CD4-positive, alpha-beta memory T cell (primary cell): ENCODE measurements at regions of chr16 and their contacts with region 1.

Region 1: GRCh38 chr16:69565671-69566239 is at the start of gene NFAT5:
- DNase-seq: peak; percentile 82 to 99 (median 92)
- H3K4me3 ChIP-seq: peak within 1 kb of the TSS; percentile 92
- H3K4me3 Mint-ChIP-seq: peak within 1 kb of the TSS; percentile 92 to 99 (median 98)
- H3K27ac ChIP-seq: peak within 1 kb of the TSS; percentile 91
- H3K27ac Mint-ChIP-seq: peak within 1 kb of the TSS; percentile 94 to 99 (median 97)
- H3K4me1 ChIP-seq: peaks cover 43% of the 10 kb centered on the region
- H3K4me1 Mint-ChIP-seq: peaks cover 28 to 58% (median 37%) of the 10 kb centered on the region in 4 donors
- H3K27me3 ChIP-seq: no peaks in the 10 kb centered on the region
- H3K27me3 Mint-ChIP-seq: no peaks in the 10 kb centered on the region
- total RNA-seq, gene NFAT5: 29.2 to 35.6 TPM

Region 2: GRCh38 chr16:69273009-69273408 is 292.7 kb before region 1 on chr16:
- CTCF ChIA-PET with region 1: no interaction called
- POLR2A ChIA-PET with region 1: no interaction called
- intact Hi-C with region 1: no loop called
- DNase-seq: no peak
- H3K4me3 ChIP-seq: no peak overlapping the region
- H3K4me3 Mint-ChIP-seq: no peak overlapping the region
- H3K27ac ChIP-seq: no peak overlapping the region
- H3K27ac Mint-ChIP-seq: peak overlapping the region in 1 of 7 donors; percentile 53
- H3K4me1 ChIP-seq: no peaks in the 10 kb centered on the region
- H3K4me1 Mint-ChIP-seq: peaks cover 0 to 8% (median 1%) of the 10 kb centered on the region in 4 donors
- H3K27me3 ChIP-seq: no peaks in the 10 kb centered on the region
- H3K27me3 Mint-ChIP-seq: no peaks in the 10 kb centered on the region

Region 3: DNA sequence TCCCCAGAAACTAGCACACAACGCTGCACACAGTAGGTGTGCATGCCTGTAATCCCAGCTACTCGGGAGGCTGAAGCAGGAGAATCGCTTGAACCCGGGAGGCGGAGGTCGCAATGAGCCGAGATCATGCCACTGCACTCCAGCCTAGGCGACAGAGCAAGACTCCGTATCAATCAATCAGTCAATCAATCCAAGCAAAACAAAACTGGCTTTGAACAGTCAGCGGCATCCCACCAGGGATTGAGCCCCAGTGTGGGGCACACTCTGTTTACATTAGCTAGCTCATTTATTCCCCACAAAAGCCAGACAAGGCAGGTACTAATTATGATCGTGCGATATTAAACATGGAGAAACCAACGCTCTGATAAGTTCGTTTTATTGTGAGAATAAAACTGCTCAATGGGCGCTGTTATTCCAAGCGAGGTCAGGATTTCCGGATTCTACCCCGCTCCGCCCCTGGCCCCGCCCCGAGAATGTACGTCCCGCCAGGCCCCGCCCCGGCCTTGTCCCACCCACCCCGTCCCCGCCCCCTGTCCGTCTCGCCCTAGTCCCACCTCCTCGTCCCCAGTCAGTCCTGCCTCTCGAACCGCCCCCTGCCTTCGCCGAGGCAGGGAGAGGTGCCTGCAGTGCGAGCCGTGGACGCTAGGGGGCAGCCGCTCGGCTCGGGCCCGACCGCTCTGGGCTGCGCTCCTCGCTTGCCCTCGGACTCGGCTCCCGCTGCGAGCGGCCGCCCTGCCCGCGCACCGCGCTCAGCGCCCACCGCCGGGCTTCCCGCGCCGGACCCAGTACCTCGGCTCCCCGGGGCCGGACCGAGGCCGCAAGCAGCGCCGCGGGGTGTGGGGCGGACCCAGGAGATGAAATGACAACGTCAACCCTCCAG is 254.9 kb before region 1 on chr16 and contains the start of gene VPS4A:
- CTCF ChIA-PET with region 1: no interaction called
- POLR2A ChIA-PET with region 1: no interaction called
- intact Hi-C with region 1: loop called (anchors 2 kb)
- DNase-seq: peak; percentile 96 to 99 (median 97)
- H3K4me3 ChIP-seq: peak within 1 kb of the TSS; percentile 70 to 73
- H3K4me3 Mint-ChIP-seq: peak within 1 kb of the TSS; percentile 93 to 99 (median 98)
- H3K27ac ChIP-seq: peak within 1 kb of the TSS; percentile 85
- H3K27ac Mint-ChIP-seq: peak within 1 kb of the TSS; percentile 85 to 98 (median 95)
- H3K4me1 ChIP-seq: peaks cover 28% of the 10 kb centered on the region
- H3K4me1 Mint-ChIP-seq: peaks cover 16 to 36% (median 27%) of the 10 kb centered on the region in 4 donors
- H3K27me3 ChIP-seq: no peaks in the 10 kb centered on the region
- H3K27me3 Mint-ChIP-seq: no peaks in the 10 kb centered on the region
- total RNA-seq, gene VPS4A: 46.7 to 48.3 TPM

Region 4: GRCh38 chr16:69386596-69386995 is 179.2 kb before region 1 on chr16:
- CTCF ChIA-PET with region 1: interaction called, 3 read pairs
- POLR2A ChIA-PET with region 1: interaction called, 5 read pairs
- intact Hi-C with region 1: loop called (anchors 2 kb)
- DNase-seq: no peak
- H3K4me3 ChIP-seq: no peak overlapping the region
- H3K4me3 Mint-ChIP-seq: peak overlapping the region in 6 of 8 donors; percentile 48 to 98 (median 91)
- H3K27ac ChIP-seq: peak overlapping the region; percentile 81
- H3K27ac Mint-ChIP-seq: peak overlapping the region in 5 of 7 donors; percentile 59 to 98 (median 96)
- H3K4me1 ChIP-seq: peaks cover 30% of the 10 kb centered on the region
- H3K4me1 Mint-ChIP-seq: peaks cover 17 to 41% (median 27%) of the 10 kb centered on the region in 4 donors
- H3K27me3 ChIP-seq: no peaks in the 10 kb centered on the region
- H3K27me3 Mint-ChIP-seq: no peaks in the 10 kb centered on the region

Region 5: DNA sequence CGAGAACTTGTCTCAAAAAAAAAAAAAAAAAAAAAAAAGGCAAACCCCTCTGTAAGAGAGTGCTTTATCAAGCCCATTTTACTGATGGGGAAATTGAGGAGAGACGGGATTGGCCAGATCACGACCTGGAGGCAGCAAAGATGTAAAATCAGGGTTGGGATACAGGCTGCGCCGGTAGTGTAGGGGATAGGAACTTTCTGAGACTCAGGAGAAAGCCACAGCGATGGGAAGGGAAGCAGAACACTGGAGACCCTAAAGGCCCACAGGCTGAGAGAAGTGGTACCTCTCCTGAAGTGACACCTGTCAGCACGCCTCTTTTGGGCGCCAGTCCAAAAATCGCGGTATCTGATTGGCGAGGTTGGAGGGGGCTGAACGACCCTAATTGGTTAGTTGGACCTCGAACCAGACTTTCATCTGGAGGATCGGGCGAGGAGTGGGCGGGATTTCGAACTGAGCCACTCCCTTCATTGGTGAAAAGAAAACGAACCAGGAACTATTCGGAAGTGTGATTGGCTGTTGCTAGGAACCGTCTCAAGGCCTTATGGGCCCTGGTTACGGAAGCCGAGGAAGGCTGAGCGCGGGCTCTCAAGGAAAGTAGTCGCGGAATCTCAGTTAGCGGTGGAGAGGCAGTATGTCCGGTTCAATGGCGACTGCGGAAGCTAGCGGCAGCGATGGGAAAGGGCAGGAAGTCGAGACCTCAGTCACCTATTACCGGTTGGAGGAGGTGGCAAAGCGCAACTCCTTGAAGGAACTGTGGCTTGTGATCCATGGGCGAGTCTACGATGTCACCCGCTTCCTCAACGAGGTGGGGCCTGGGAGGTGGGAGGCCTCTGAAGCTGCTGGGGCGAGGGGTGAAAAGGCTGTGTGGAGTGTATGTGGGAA is 141.5 kb before region 1 on chr16 and contains the start of gene CYB5B:
- CTCF ChIA-PET with region 1: no interaction called
- POLR2A ChIA-PET with region 1: interaction called, 17 read pairs
- intact Hi-C with region 1: loop called (anchors 1 kb)
- DNase-seq: peak; percentile 95 to 99 (median 97)
- H3K4me3 ChIP-seq: peak within 1 kb of the TSS; percentile 84 to 90
- H3K4me3 Mint-ChIP-seq: peak within 1 kb of the TSS; percentile 93 to 98 (median 96)
- H3K27ac ChIP-seq: peak within 1 kb of the TSS; percentile 71
- H3K27ac Mint-ChIP-seq: peak within 1 kb of the TSS; percentile 85 to 99 (median 96)
- H3K4me1 ChIP-seq: peaks cover 19% of the 10 kb centered on the region
- H3K4me1 Mint-ChIP-seq: peaks cover 23 to 45% (median 26%) of the 10 kb centered on the region in 4 donors
- H3K27me3 ChIP-seq: no peaks in the 10 kb centered on the region
- H3K27me3 Mint-ChIP-seq: no peaks in the 10 kb centered on the region
- total RNA-seq, gene CYB5B: 59.2 to 64.4 TPM

Region 6: DNA sequence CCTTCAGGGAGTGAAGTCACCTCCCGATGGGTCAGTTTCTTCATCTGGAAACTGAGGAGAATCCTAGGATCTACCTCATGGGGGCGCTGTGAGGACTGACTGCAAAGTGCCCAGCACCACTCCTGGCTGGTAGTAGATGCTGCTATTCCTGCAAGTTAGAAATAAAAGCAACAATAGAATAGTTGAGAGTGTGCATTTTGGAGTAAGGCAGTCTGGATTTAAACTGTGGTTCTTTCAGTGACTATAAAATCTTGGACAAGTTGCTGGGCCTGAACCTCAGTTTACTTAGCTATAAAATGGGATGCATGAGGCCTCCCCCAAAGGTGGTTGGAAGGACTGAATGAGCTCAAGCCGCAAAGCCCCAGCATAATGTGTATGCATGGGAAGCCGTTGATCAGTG is 70.8 kb before region 1 on chr16:
- CTCF ChIA-PET with region 1: no interaction called
- POLR2A ChIA-PET with region 1: no interaction called
- intact Hi-C with region 1: loop called (anchors 2 kb)
- DNase-seq: peak in 3 of 5 donors; percentile 4 to 8 (median 5)
- H3K4me3 ChIP-seq: no peak overlapping the region
- H3K4me3 Mint-ChIP-seq: no peak overlapping the region
- H3K27ac ChIP-seq: no peak overlapping the region
- H3K27ac Mint-ChIP-seq: no peak overlapping the region
- H3K4me1 ChIP-seq: no peaks in the 10 kb centered on the region
- H3K4me1 Mint-ChIP-seq: no peaks in the 10 kb centered on the region
- H3K27me3 ChIP-seq: no peaks in the 10 kb centered on the region
- H3K27me3 Mint-ChIP-seq: no peaks in the 10 kb centered on the region

Region 7: DNA sequence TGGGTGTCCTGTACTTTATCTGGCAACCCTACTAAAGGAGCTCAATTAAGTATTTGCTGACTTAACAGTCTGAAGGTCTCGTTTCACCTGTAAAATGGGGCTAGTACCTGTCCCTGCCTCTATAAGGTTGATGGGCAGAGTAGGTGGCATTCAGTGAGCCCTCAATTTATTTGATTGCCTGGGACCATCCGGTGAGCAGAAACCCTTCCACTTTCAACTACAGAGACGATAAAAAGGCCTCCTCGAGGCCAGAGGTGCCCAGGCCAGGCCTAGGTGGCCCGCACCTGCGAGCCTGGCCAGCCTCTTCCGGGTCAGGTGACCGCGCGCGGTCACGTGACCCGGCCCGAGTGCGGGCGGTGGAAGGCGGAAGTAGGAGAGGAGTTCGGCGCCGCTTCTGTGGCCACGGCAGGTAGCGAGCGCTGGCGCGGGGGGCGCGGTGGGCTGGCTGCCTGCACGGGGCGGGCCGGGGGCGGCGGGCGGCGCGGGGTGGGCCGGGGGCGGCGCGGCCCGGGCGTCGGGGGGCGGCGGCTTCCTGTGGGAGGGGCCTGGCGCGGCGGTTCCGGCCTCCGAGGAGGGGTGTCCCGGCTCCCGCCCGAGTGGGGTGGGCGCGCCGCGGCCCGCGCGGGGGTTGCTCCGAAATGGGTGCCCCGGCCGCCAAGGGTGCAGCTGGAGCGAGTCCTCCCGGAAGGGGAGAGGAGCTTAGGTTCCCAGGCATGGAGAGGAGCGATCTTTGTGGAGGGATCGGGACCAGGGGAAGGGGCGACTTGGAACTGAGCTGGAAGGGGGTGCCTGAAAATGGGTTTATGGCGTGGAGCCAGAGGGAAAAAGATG is 196.4 kb after region 1 on chr16 and contains the start of gene WWP2:
- CTCF ChIA-PET with region 1: no interaction called
- POLR2A ChIA-PET with region 1: interaction called, 9 read pairs
- intact Hi-C with region 1: loop called (anchors 5 kb)
- DNase-seq: peak; percentile 80 to 83 (median 82)
- H3K4me3 ChIP-seq: peak within 1 kb of the TSS; percentile 67 to 97
- H3K4me3 Mint-ChIP-seq: peak within 1 kb of the TSS; percentile 92 to 97 (median 93)
- H3K27ac ChIP-seq: peak within 1 kb of the TSS; percentile 90
- H3K27ac Mint-ChIP-seq: peak within 1 kb of the TSS; percentile 94 to 99 (median 98)
- H3K4me1 ChIP-seq: peaks cover 32% of the 10 kb centered on the region
- H3K4me1 Mint-ChIP-seq: peaks cover 17 to 51% (median 34%) of the 10 kb centered on the region in 4 donors
- H3K27me3 ChIP-seq: no peaks in the 10 kb centered on the region
- H3K27me3 Mint-ChIP-seq: no peaks in the 10 kb centered on the region
- total RNA-seq, gene WWP2: 76.3 to 77.0 TPM